K562 (cell line): ENCODE measurements at regions of chr6 and their contacts with region 1.

Region 1: DNA sequence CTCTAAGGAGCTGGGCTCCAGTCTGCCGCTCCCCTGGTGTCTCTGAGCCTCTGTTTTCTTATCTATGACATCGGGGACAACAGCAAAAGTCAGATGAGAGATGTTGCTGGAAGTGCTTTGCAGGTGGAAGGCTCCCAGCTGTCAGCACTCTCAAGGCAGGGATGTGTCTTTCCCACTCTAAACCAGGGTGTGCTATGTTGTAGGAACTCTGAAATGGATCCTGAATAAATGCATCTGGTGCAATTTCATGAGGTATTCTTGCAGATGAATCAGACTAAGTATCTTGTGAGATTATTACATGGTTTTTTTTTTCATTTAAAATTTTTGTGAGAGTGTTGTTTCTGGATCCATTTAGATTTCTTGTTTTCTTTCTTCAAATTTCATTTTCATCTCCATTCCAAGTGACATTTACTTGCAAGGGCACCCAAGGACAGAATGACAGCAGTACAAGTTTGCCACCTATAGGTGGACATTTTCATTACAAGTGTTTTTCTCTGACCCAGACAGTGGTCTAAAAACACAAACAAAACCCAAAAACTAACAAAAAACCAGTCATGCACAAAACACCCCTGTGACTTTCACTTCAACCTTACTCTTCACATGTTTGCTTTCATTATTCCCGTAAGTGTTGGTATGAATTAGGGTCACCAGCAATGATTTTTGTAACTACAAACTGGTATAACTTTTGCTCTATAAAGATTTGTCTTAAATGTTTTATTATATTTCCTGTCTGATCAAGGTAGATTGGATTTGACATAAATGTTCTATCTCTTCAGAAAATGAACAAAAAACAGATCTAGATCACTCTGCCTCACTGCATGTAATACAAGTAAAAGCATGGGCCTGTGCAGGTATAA is 14.7 kb upstream of the SIM1 start:
- DNase-seq: peak; percentile 40 to 61 (median 54)
- ATAC-seq: peak; percentile 89
- H3K4me3 ChIP-seq: no peak overlapping the region
- H3K27ac ChIP-seq: no peak overlapping the region
- H3K4me1 ChIP-seq: no peaks in the 10 kb centered on the region
- H3K27me3 ChIP-seq: no peaks in the 10 kb centered on the region; a peak in 2 of 5 replicates
- CTCF ChIP-seq: peak; percentile 65 to 86 (median 67); a peak in 5 of 6 replicates
- EP300 ChIP-seq: no peak
- POLR2A ChIP-seq: no peak
- RAD21 ChIP-seq: peak; percentile 91 to 96

Region 2: DNA sequence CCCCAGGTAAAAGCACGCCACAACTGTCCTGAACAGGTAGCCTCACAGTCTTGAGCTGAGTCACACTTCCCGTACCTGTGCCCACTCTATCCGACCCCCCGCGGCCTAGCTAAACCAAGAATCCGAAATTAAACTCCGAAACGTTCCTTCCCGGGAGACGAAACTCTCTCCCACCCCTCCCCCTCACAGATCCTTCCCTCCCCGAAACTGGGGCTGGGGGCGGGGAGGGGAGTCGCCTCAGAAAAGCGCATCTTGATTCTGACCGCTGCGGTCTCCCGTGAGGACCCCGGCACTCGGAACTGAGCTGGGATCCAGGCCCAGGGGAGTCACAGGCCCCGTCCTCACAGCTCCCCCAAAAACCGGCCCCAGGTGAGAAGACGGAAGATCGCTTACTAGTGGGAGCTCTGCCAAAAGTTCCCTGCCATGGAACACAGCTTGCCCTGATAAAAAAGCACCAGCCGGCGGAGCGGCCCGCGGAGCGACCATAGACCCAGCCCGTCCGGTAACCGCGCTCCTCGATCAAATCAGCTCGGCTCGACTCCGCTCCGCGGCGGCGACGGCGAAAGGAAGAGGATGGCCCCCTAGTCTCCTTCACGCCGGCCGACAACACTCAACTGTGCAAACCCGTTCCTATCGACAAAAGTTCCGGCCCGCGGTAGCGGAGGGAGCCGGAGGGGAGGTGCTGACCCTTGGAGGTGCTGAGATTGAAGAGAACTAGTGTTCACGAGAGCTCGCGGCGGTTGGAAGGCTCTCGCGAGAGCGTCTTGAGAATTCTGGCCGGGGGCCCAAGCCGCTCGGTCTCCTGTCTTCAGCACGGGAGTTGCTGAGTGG is 911.1 kb before region 1 on chr6 and contains the start of gene CCNC:
- CTCF ChIA-PET with region 1: no interaction called
- POLR2A ChIA-PET with region 1: no interaction called
- in situ Hi-C with region 1: no loop called
- intact Hi-C with region 1: no loop called
- DNase-seq: peak; percentile 84 to 93 (median 88)
- ATAC-seq: peak; percentile 96
- H3K4me3 ChIP-seq: peak within 1 kb of the TSS; percentile 91
- H3K27ac ChIP-seq: peak within 1 kb of the TSS; percentile 90
- H3K4me1 ChIP-seq: peaks cover 0 to 11% of the 10 kb centered on the region in 2 experiments; a peak in 1 of 5 replicates
- H3K27me3 ChIP-seq: no peaks in the 10 kb centered on the region
- CTCF ChIP-seq: peak in 1 of 3 experiments; percentile 26; a peak in 1 of 6 replicates
- EP300 ChIP-seq: peak; percentile 54; the same call in 1 of the 2 replicates
- POLR2A ChIP-seq: peak; percentile 93
- RAD21 ChIP-seq: peak in 1 of 2 experiments; percentile 20; a peak in 2 of 4 replicates
- polyA plus RNA-seq, gene CCNC: 133 to 177 TPM

Region 3: DNA sequence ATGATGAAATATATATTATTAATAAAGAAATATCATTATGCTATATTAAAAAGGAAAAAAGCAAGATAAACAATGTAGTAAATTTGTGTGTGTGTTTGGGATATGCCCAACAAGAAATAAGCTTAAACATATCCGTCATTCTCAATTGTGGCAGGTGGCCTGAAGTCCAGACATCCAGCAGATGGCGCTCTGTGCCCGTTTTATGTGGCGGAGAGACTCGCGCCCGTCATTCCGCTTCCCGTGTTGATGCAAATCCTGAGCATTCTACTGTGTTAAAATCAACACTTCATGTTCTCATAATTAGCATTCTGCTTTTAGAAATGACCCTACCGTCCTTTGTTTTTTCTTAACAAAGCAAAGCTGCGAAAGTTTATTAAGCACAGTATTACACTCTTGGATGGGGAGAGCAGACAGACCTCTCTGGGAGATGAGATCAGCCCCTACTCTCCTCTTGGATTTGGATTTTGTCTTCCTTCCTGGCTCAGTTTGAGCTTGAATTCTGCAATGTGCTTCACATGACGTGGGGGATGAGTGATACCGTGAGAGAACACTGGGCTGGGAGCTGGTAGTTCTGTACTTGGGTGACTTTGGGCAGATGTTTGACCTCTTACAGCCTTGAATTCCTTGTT is 611.2 kb before region 1 on chr6:
- CTCF ChIA-PET with region 1: no interaction called
- POLR2A ChIA-PET with region 1: no interaction called
- in situ Hi-C with region 1: loop called (anchors 10 kb)
- intact Hi-C with region 1: loop called (anchors 5 kb)
- DNase-seq: peak; percentile 47 to 79 (median 58)
- ATAC-seq: peak; percentile 96
- H3K4me3 ChIP-seq: no peak overlapping the region
- H3K27ac ChIP-seq: no peak overlapping the region
- H3K4me1 ChIP-seq: no peaks in the 10 kb centered on the region
- H3K27me3 ChIP-seq: no peaks in the 10 kb centered on the region
- CTCF ChIP-seq: peak; percentile 73 to 88 (median 87)
- EP300 ChIP-seq: no peak
- POLR2A ChIP-seq: no peak
- RAD21 ChIP-seq: peak; percentile 73 to 82

Region 4: DNA sequence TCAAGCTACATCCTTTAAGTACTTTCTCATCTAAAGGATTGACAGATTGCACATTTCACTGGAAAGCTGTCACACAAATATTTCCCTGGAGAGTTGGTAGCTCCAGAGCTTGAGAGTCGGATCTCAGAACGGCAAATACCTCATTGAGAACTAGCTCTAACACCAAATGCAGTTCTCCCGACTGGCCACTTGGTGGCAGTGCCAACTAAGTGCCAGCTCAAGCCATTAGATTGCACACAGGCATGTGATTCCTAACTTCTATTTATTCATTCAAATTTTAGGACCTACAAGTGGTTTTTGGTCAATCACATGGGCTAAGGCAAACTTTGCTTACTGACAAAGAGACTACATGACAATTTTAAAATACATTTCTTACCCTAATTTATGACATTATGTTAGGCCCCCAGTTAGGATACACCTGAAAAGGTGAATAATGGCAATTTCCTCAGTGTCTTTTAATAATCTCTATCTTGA is 477.5 kb before region 1 on chr6:
- CTCF ChIA-PET with region 1: no interaction called
- POLR2A ChIA-PET with region 1: no interaction called
- in situ Hi-C with region 1: no loop called
- intact Hi-C with region 1: loop called (anchors 2 kb)
- DNase-seq: peak; percentile 40 to 52 (median 51)
- ATAC-seq: peak; percentile 88
- H3K4me3 ChIP-seq: no peak overlapping the region
- H3K27ac ChIP-seq: no peak overlapping the region
- H3K4me1 ChIP-seq: no peaks in the 10 kb centered on the region
- H3K27me3 ChIP-seq: no peaks in the 10 kb centered on the region
- CTCF ChIP-seq: peak; percentile 75 to 82 (median 80)
- EP300 ChIP-seq: no peak
- POLR2A ChIP-seq: no peak
- RAD21 ChIP-seq: peak; percentile 59 to 75

Region 5: GRCh38 chr6:100105138-100105753 is 374.2 kb before region 1 on chr6:
- CTCF ChIA-PET with region 1: interaction called, 15 read pairs
- POLR2A ChIA-PET with region 1: no interaction called
- in situ Hi-C with region 1: no loop called
- intact Hi-C with region 1: no loop called
- DNase-seq: no peak
- ATAC-seq: no peak
- H3K4me3 ChIP-seq: no peak overlapping the region
- H3K27ac ChIP-seq: no peak overlapping the region
- H3K4me1 ChIP-seq: no peaks in the 10 kb centered on the region
- H3K27me3 ChIP-seq: no peaks in the 10 kb centered on the region
- CTCF ChIP-seq: no peak
- EP300 ChIP-seq: no peak
- POLR2A ChIP-seq: no peak
- RAD21 ChIP-seq: no peak

Region 6: GRCh38 chr6:100116411-100117194 is 362.8 kb before region 1 on chr6:
- CTCF ChIA-PET with region 1: interaction called, 35 read pairs
- POLR2A ChIA-PET with region 1: no interaction called
- in situ Hi-C with region 1: loop called (anchors 5 kb)
- intact Hi-C with region 1: loop called (anchors 1 kb)
- DNase-seq: peak; percentile 19 to 71 (median 24)
- ATAC-seq: peak; percentile 89
- H3K4me3 ChIP-seq: no peak overlapping the region
- H3K27ac ChIP-seq: no peak overlapping the region
- H3K4me1 ChIP-seq: no peaks in the 10 kb centered on the region
- H3K27me3 ChIP-seq: peaks cover 0 to 6% of the 10 kb centered on the region in 2 experiments; a peak in 1 of 5 replicates
- CTCF ChIP-seq: peak; percentile 59 to 87 (median 85)
- EP300 ChIP-seq: no peak
- POLR2A ChIP-seq: no peak
- RAD21 ChIP-seq: peak; percentile 85 to 88

Region 7: DNA sequence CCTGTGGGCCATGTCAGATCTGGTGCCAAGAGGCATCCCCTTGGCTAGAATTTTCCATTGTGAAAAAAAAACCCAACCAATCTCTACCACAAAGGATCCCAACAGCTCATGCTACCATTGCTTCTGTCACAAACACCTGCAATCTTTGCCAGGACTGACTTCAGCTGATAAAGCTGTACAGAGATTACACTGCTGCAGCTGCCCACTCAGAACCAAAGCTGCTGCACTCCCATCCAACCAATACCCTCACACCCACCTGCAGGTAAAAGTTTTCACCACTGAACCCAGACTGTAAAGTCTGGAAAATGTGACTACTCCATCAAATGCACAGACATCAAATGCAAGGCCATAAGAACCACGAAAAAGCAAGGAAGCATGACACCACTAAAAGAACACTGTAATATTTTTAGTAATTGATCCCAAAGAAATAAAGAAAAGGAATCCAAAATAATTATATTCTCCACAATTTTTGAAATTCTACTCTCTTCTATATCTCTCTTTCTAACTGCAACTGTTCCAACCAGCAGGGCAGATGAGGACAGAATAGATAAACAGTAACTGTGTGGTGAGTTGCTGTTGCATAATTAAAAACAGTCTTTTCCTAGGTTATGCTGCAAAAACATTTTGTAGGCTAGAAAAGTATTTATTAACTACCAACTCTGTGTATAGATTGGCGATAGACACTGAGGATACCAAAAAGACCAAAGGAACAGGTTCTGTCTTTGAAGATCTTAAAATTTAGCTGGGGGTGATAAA is 357.4 kb before region 1 on chr6:
- CTCF ChIA-PET with region 1: interaction called, 35 read pairs
- POLR2A ChIA-PET with region 1: no interaction called
- in situ Hi-C with region 1: loop called (anchors 5 kb)
- intact Hi-C with region 1: no loop called
- DNase-seq: no peak
- ATAC-seq: no peak
- H3K4me3 ChIP-seq: no peak overlapping the region
- H3K27ac ChIP-seq: no peak overlapping the region
- H3K4me1 ChIP-seq: no peaks in the 10 kb centered on the region
- H3K27me3 ChIP-seq: no peaks in the 10 kb centered on the region
- CTCF ChIP-seq: no peak
- EP300 ChIP-seq: no peak
- POLR2A ChIP-seq: no peak
- RAD21 ChIP-seq: no peak

Region 8: DNA sequence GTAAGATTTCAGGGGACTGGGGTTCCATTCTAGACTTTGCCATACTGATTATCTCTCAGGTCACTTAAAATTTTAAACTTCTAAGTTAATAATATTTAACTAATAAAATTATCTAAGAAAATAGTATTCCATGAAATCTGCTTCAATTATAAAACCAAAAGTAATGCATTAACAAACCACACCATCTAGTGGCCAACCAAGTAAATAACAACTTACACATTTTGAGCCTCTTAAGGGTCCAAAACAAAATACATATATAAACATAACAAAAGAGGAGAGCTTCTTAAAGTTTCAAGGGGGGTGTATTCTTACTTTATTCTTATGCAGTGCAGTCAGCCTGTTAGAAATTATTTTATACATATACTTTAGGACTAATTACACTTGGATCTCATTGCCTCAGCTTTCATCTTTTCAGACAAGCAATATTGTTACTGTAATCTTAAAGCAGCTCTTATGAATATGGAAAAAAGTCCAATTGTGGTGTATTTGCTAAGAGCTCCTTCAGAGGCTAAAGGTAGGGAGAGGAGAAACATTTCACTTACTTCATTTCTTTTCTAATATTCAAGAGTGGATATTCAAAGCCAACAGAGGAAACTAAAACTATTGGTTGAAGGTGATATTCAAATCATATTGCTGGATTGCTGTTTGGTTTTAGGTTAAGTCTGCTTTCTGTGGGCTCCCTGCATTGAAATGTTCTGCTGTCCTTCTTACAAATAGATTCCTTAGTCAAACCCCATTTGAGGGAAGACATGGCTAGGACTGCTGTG is 185.1 kb after region 1 on chr6:
- CTCF ChIA-PET with region 1: no interaction called
- POLR2A ChIA-PET with region 1: no interaction called
- in situ Hi-C with region 1: loop called (anchors 10 kb)
- intact Hi-C with region 1: loop called (anchors 5 kb)
- DNase-seq: peak; percentile 8 to 31 (median 20)
- ATAC-seq: peak; percentile 62
- H3K4me3 ChIP-seq: no peak overlapping the region
- H3K27ac ChIP-seq: no peak overlapping the region
- H3K4me1 ChIP-seq: no peaks in the 10 kb centered on the region
- H3K27me3 ChIP-seq: no peaks in the 10 kb centered on the region
- CTCF ChIP-seq: peak in 2 of 3 experiments; percentile 29 to 65; a peak in 3 of 6 replicates
- EP300 ChIP-seq: no peak
- POLR2A ChIP-seq: no peak
- RAD21 ChIP-seq: peak; percentile 41 to 50